ENCODE measurements at regions of chr6 and their contacts with region 1.

Region 1: GRCh38 chr6:36054956-36055355 is 27.3 kb downstream of the MAPK14 start:
- DNase-seq: no peak
- ATAC-seq: no peak
- H3K4me3 ChIP-seq: no peak overlapping the region
- H3K4me3 Mint-ChIP-seq: peak overlapping the region in 1 of 10 donors; percentile 24
- H3K27ac ChIP-seq: no peak overlapping the region
- H3K27ac Mint-ChIP-seq: peak overlapping the region in 2 of 9 donors; percentile 8 to 84
- H3K4me1 ChIP-seq: peaks cover 7 to 15% of the 10 kb centered on the region in 2 donors
- H3K4me1 Mint-ChIP-seq: peaks cover 5 to 47% (median 24%) of the 10 kb centered on the region in 7 donors
- H3K27me3 ChIP-seq: no peaks in the 10 kb centered on the region
- H3K27me3 Mint-ChIP-seq: no peaks in the 10 kb centered on the region

Region 2: DNA sequence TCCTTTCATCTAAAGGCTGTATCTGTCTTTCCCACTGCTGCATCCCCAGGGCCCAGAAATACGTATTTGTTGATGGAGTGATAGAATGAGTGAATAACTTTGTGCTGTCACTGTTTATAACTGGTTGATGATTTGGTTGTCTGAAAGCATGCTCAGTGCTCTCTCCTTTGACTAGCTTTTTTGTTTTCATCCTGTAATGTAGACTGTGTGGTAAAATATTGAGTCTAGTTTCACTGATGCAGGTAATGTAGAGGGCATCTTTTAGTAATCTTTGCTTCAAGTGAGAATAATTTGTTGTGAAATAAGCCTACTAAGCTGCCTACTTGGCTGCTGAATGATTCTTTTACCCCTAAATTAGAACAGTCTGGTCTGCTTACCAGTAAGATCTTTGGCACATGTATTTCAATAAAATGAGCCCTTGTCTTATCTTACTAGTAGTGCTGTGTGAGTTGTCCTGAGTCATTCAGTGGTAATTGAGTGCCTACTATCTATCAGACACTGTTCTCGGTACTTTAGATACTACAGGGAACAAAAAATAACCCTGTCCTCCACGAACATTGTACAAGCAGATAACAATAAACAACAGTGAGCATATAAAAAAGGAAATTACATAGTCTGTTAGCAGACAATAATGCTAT is 12.5 kb after region 1 on chr6:
- CTCF ChIA-PET with region 1: no interaction called
- POLR2A ChIA-PET with region 1: no interaction called
- intact Hi-C with region 1: loop called in 1 of 2 experiments (anchors 2 kb)
- DNase-seq: no peak
- ATAC-seq: peak; percentile 37
- H3K4me3 ChIP-seq: no peak overlapping the region
- H3K4me3 Mint-ChIP-seq: no peak overlapping the region
- H3K27ac ChIP-seq: no peak overlapping the region
- H3K27ac Mint-ChIP-seq: peak overlapping the region in 8 of 9 donors; percentile 4 to 79 (median 54)
- H3K4me1 ChIP-seq: peaks cover 0 to 7% of the 10 kb centered on the region in 2 donors
- H3K4me1 Mint-ChIP-seq: peaks cover 41 to 90% (median 77%) of the 10 kb centered on the region in 7 donors
- H3K27me3 ChIP-seq: no peaks in the 10 kb centered on the region
- H3K27me3 Mint-ChIP-seq: no peaks in the 10 kb centered on the region

Region 3: DNA sequence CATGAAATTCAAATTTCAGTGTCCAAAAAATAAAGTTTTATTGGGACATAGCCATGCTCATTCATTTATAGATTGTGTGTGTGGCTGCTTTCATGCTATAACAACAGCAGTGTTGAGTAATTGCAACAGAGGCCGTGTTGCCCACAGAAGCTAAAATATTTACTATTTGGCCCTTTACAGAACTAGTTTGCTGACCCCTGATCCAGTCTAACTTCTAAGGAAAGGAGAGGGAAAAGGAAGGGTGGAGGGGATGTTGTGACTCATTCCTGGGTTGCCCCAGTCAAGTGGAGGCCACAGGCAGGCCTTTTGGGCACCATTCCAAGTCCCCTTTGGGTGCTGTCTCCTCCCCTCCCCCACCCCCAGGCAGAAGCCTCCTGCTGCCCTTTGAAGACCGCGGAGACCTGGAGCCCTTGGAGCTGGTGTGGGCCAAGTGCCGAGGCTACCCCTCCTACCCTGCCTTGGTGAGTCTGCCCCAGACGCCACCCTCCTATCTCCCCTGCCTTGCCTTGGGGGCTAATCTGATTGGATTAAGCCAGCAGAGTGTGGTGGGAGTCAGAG is 170.0 kb after region 1 on chr6:
- CTCF ChIA-PET with region 1: no interaction called
- POLR2A ChIA-PET with region 1: no interaction called
- intact Hi-C with region 1: no loop called
- DNase-seq: no peak
- ATAC-seq: no peak
- H3K4me3 ChIP-seq: no peak overlapping the region
- H3K4me3 Mint-ChIP-seq: no peak overlapping the region
- H3K27ac ChIP-seq: no peak overlapping the region
- H3K27ac Mint-ChIP-seq: no peak overlapping the region
- H3K4me1 ChIP-seq: no peaks in the 10 kb centered on the region
- H3K4me1 Mint-ChIP-seq: peaks cover 0 to 4% (median 0%) of the 10 kb centered on the region in 7 donors
- H3K27me3 ChIP-seq: no peaks in the 10 kb centered on the region
- H3K27me3 Mint-ChIP-seq: no peaks in the 10 kb centered on the region

Region 4: GRCh38 chr6:37256692-37257319 is 1201.8 kb after region 1 on chr6:
- CTCF ChIA-PET with region 1: no interaction called
- POLR2A ChIA-PET with region 1: no interaction called
- intact Hi-C with region 1: no loop called
- DNase-seq: no peak
- ATAC-seq: no peak
- H3K4me3 ChIP-seq: peak overlapping the region; percentile 92
- H3K4me3 Mint-ChIP-seq: peak overlapping the region; percentile 34 to 99 (median 88)
- H3K27ac ChIP-seq: peak overlapping the region; percentile 87
- H3K27ac Mint-ChIP-seq: peak overlapping the region; percentile 8 to 92 (median 85)
- H3K4me1 ChIP-seq: peaks cover 18 to 21% of the 10 kb centered on the region in 2 donors
- H3K4me1 Mint-ChIP-seq: peaks cover 24 to 51% (median 40%) of the 10 kb centered on the region in 7 donors
- H3K27me3 ChIP-seq: no peaks in the 10 kb centered on the region
- H3K27me3 Mint-ChIP-seq: no peaks in the 10 kb centered on the region

Measured in naive thymus-derived CD4-positive, alpha-beta T cell (primary cell).